Panc1 (cell line): ENCODE measurements at regions of chr3 and their contacts with region 1.

Region 1: GRCh38 chr3:150495563-150496168 is 50.6 kb downstream of the SERP1 start:
- DNase-seq: peak; percentile 61
- ATAC-seq: peak; percentile 39; the same call in 1 of the 2 replicates
- H3K4me3 ChIP-seq: no peak overlapping the region
- H3K27ac ChIP-seq: peak overlapping the region; percentile 71; the same call in 1 of the 2 replicates
- H3K4me1 ChIP-seq: peaks cover 18% of the 10 kb centered on the region
- H3K27me3 ChIP-seq: no peaks in the 10 kb centered on the region
- CTCF ChIP-seq: peak; percentile 76

Region 2: GRCh38 chr3:149466192-149466591 is 1029.5 kb before region 1 on chr3:
- CTCF ChIA-PET with region 1: no interaction called
- POLR2A ChIA-PET with region 1: no interaction called
- in situ Hi-C with region 1: no loop called
- intact Hi-C with region 1: no loop called
- DNase-seq: no peak
- ATAC-seq: peak; percentile 57; the same call in 1 of the 2 replicates
- H3K4me3 ChIP-seq: no peak overlapping the region
- H3K27ac ChIP-seq: no peak overlapping the region
- H3K4me1 ChIP-seq: peaks cover 7% of the 10 kb centered on the region; the same call in 1 of the 2 replicates
- H3K27me3 ChIP-seq: no peaks in the 10 kb centered on the region
- CTCF ChIP-seq: no peak

Region 3: DNA sequence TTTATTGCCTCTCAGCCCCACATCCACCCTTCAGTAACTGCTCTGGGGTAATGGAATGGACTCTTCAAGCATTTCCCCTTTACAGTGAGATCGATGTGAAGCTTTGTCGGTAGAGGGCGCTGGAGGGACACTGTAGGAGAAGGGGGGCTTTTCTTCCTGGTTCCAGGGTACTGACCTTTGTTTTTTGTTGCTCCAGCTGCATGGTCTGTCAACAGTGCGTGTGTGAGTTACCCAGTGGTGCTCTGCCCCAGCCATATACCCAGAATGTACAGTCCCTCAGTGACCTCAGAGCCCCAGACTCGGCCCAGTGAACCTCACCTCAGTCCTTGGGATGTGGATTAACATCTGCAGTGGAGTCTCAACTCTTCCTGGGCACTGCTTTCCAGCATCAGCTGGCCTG is 267.8 kb before region 1 on chr3:
- CTCF ChIA-PET with region 1: interaction called, 10 read pairs
- POLR2A ChIA-PET with region 1: no interaction called
- in situ Hi-C with region 1: no loop called
- intact Hi-C with region 1: loop called (anchors 2 kb)
- DNase-seq: no peak
- ATAC-seq: peak; percentile 84
- H3K4me3 ChIP-seq: no peak overlapping the region
- H3K27ac ChIP-seq: peak overlapping the region; percentile 18; the same call in 1 of the 2 replicates
- H3K4me1 ChIP-seq: 0 out of 2 replicates have a peak, but pooled peaks cover 4% of the 10 kb centered on the region
- H3K27me3 ChIP-seq: no peaks in the 10 kb centered on the region
- CTCF ChIP-seq: peak; percentile 95

Region 4: DNA sequence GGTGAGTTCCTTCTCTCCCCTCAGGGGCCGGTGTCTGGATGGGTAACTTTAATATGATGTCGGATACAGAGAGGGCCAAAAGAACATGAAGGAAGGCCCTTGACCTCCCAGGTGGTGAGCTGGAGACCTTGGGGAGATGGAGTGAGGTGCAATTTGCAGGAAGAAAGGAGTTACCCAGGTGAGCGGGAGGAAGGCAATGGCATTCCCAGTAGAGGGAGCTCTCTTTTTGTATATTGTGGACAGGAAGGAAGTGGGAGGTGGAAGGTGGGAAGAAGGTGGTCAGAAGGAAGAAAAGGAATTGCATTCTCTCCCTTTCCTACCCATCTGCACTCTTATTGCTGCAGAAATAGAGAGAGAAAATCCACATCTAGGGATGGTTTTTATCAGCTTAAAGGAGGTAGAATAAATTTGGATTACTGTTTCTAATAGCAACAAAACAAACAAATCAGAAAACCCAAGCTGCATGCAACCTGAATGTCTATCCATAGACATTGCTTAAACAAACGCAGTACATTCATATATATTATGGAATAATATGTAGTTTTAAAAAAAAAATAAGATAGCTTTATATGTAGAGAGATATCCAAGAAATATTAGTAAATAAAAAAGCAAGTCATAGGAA is 256.6 kb before region 1 on chr3:
- CTCF ChIA-PET with region 1: interaction called, 6 read pairs
- POLR2A ChIA-PET with region 1: no interaction called
- in situ Hi-C with region 1: no loop called
- intact Hi-C with region 1: loop called (anchors 2 kb)
- DNase-seq: no peak
- ATAC-seq: peak; percentile 77
- H3K4me3 ChIP-seq: no peak overlapping the region
- H3K27ac ChIP-seq: peak overlapping the region; percentile 10; the same call in 1 of the 2 replicates
- H3K4me1 ChIP-seq: peaks cover 10% of the 10 kb centered on the region; the same call in 1 of the 2 replicates
- H3K27me3 ChIP-seq: no peaks in the 10 kb centered on the region
- CTCF ChIP-seq: peak; percentile 89

Region 5: GRCh38 chr3:150286390-150287147 is 209.1 kb before region 1 on chr3:
- CTCF ChIA-PET with region 1: no interaction called
- POLR2A ChIA-PET with region 1: no interaction called
- in situ Hi-C with region 1: no loop called
- intact Hi-C with region 1: loop called (anchors 5 kb)
- DNase-seq: no peak
- ATAC-seq: peak; percentile 97
- H3K4me3 ChIP-seq: no peak overlapping the region
- H3K27ac ChIP-seq: peak overlapping the region; percentile 77
- H3K4me1 ChIP-seq: peaks cover 2% of the 10 kb centered on the region; the same call in 1 of the 2 replicates
- H3K27me3 ChIP-seq: no peaks in the 10 kb centered on the region
- CTCF ChIP-seq: peak; percentile 79